ENCODE measurements at regions of chr6 and their contacts with region 1.

Region 1: GRCh38 chr6:111573131-111573883 is 32.4 kb downstream of the TRAF3IP2 start:
- DNase-seq: no peak
- ATAC-seq: no peak
- H3K4me3 ChIP-seq: no peak overlapping the region
- H3K27ac ChIP-seq: peak overlapping the region; percentile 74
- H3K4me1 ChIP-seq: peaks cover 26% of the 10 kb centered on the region
- H3K27me3 ChIP-seq: no peaks in the 10 kb centered on the region
- CTCF ChIP-seq: no peak
- EP300 ChIP-seq: no peak
- POLR2A ChIP-seq: no peak
- RAD21 ChIP-seq: no peak

Region 2: GRCh38 chr6:109978174-109979032 is 1594.9 kb before region 1 on chr6 and contains the start of gene GPR6:
- CTCF ChIA-PET with region 1: no interaction called
- POLR2A ChIA-PET with region 1: no interaction called
- in situ Hi-C with region 1: no loop called
- intact Hi-C with region 1: no loop called
- DNase-seq: peak; percentile 24
- ATAC-seq: peak; percentile 98
- H3K4me3 ChIP-seq: no peak within 1 kb of the TSS
- H3K27ac ChIP-seq: no peak within 1 kb of the TSS
- H3K4me1 ChIP-seq: no peaks in the 10 kb centered on the region
- H3K27me3 ChIP-seq: no peaks in the 10 kb centered on the region; a peak in 1 of 5 replicates
- CTCF ChIP-seq: no peak
- EP300 ChIP-seq: no peak
- POLR2A ChIP-seq: no peak
- RAD21 ChIP-seq: no peak
- total RNA-seq, gene GPR6: not detected in 2 replicates

Region 3: DNA sequence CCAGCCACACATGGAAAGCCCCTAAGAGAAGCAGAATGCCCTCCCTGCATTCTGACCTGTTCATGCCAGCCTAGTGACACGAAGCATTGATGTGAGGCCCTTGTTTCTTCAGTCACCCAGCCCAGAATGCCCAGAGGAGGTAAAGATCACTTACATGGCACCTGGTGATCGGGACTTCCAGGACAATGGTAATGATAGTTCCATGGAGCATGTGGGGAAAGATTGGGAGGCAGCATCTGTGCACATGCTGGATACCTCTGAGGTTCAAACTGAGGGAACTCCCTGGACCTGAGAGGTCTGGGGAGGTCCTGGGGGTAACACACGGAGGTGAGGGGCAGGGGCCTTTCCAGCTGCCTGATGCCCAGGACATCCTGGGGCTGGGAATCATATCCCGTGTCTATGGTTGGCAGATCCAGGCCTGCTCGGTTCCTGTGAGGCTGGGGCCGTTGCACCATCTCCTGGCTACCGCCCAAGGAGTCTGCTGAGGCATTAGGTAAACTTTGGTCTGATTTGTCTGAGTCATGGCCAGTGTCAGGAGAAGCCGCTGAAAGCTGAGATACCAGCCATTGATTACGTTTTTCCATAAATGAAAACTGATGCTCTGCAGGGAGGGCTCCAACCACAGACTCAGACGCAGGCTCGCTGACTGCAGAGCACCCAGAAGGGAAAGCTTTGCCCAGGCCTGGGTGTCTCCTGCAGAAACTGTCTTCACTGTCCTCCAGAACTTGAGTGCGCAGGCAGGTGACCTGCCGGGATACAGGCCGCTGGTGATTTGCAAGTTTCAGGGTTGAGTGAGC is 18.0 kb after region 1 on chr6:
- CTCF ChIA-PET with region 1: no interaction called
- POLR2A ChIA-PET with region 1: interaction called, 4 read pairs
- in situ Hi-C with region 1: no loop called
- intact Hi-C with region 1: loop called (anchors 1 kb)
- DNase-seq: peak; percentile 88
- ATAC-seq: peak; percentile 91
- H3K4me3 ChIP-seq: 0 out of 6 replicates have a peak overlapping the region, but pooled peaks of 1 of the 3 experiments have one; percentile 5
- H3K27ac ChIP-seq: no peak overlapping the region
- H3K4me1 ChIP-seq: peaks cover 40% of the 10 kb centered on the region
- H3K27me3 ChIP-seq: no peaks in the 10 kb centered on the region
- CTCF ChIP-seq: peak; percentile 30; the same call in 1 of the 2 replicates
- EP300 ChIP-seq: peak; percentile 60 to 75; a peak in 3 of 4 replicates
- POLR2A ChIP-seq: no peak
- RAD21 ChIP-seq: no peak

Region 4: DNA sequence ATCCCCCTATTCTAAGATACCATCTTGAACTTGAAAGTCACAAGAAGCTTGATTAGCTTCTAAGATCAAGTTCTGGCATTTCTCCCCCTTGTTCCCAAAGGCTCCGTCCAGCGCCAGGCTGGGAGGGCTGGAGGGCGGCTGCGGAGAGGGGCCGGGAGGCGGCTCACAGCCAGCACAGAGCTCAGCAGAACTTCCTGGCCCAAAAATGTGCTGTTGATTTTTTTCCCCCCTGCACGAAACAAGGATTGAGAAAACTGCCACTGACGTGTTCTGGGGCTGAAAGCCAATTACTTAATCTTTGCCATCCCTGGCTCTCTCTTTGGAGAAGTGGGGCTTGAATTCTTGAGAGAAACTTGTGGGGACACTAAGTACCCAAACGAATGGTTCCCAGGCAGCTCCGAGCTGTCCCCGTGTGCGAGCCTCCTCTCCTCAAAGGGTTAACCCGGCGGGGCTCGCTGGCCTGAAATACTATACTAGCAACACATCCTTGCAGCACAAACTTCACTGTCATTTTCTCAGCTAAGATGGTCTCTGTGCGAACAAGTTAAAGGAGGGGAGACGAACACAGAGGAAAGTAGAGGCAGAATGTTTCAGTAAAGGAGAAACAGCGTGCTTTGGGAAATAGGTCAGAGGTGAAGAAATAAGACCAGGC is 31.9 kb after region 1 on chr6:
- CTCF ChIA-PET with region 1: no interaction called
- POLR2A ChIA-PET with region 1: interaction called, 10 read pairs
- in situ Hi-C with region 1: no loop called
- intact Hi-C with region 1: loop called (anchors 1 kb)
- DNase-seq: no peak
- ATAC-seq: peak; percentile 45
- H3K4me3 ChIP-seq: peak overlapping the region; percentile 72 to 93 (median 82)
- H3K27ac ChIP-seq: peak overlapping the region; percentile 66
- H3K4me1 ChIP-seq: peaks cover 78% of the 10 kb centered on the region
- H3K27me3 ChIP-seq: no peaks in the 10 kb centered on the region; a peak in 1 of 5 replicates
- CTCF ChIP-seq: no peak
- EP300 ChIP-seq: no peak
- POLR2A ChIP-seq: no peak
- RAD21 ChIP-seq: no peak

Region 5: DNA sequence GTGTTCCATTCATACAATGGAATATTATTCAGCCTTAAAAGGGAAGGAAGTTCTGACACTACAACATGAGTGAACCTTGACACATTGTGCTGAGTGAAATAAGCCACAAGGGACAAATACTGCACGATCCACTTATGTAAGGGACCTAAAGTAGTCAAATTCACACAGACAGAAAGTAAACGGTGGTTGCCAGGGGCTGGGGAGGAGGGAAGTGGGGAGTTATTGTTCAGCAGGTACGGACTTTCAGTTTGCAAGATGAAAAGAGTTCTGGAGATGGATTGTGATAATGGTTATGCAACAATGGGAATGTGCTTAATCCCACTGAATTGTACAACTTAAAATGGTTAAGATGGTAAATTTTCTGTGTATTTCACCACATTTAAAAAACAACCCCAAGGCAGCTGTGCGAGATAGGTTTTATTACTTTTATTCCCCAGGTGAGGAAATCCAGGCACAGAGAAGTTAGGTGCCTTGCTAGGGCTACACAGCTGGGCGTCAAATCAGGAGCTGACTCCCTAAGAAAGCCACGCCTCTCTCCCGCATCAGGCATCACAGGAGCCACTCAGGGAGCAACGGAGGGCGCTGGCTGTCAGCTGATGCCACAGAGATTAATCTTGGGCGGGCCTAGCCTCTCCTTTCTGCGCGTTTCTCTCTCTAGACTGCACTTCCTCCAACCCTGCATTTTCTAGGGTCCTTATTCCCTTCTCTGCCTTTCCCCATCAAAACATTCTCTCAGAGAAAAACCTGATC is 41.7 kb after region 1 on chr6:
- CTCF ChIA-PET with region 1: no interaction called
- POLR2A ChIA-PET with region 1: interaction called, 4 read pairs
- in situ Hi-C with region 1: no loop called
- intact Hi-C with region 1: loop called (anchors 1 kb)
- DNase-seq: peak; percentile 64
- ATAC-seq: peak; percentile 39
- H3K4me3 ChIP-seq: peak overlapping the region; percentile 22 to 51 (median 49)
- H3K27ac ChIP-seq: no peak overlapping the region
- H3K4me1 ChIP-seq: peaks cover 64% of the 10 kb centered on the region
- H3K27me3 ChIP-seq: no peaks in the 10 kb centered on the region; a peak in 1 of 5 replicates
- CTCF ChIP-seq: no peak
- EP300 ChIP-seq: no peak
- POLR2A ChIP-seq: no peak
- RAD21 ChIP-seq: no peak

Region 6: GRCh38 chr6:112049026-112049799 is 475.9 kb after region 1 on chr6:
- CTCF ChIA-PET with region 1: no interaction called
- POLR2A ChIA-PET with region 1: no interaction called
- in situ Hi-C with region 1: no loop called
- intact Hi-C with region 1: no loop called
- DNase-seq: peak; percentile 17
- ATAC-seq: peak; percentile 41
- H3K4me3 ChIP-seq: no peak overlapping the region
- H3K27ac ChIP-seq: no peak overlapping the region
- H3K4me1 ChIP-seq: peaks cover 14% of the 10 kb centered on the region; the same call in 1 of the 2 replicates
- H3K27me3 ChIP-seq: peaks cover 0 to 11% of the 10 kb centered on the region in 2 experiments; a peak in 2 of 5 replicates
- CTCF ChIP-seq: no peak
- EP300 ChIP-seq: no peak
- POLR2A ChIP-seq: no peak
- RAD21 ChIP-seq: no peak